Endothelial cell of umbilical vein (primary cell): ENCODE measurements at regions of chr12 and their contacts with region 1.

Region 1: GRCh38 chr12:47636908-47637780 is 68.7 kb downstream of the RPAP3 start:
- DNase-seq: no peak
- H3K4me3 ChIP-seq: no peak overlapping the region
- H3K27ac ChIP-seq: no peak overlapping the region
- H3K4me1 ChIP-seq: no peaks in the 10 kb centered on the region
- H3K27me3 ChIP-seq: no peaks in the 10 kb centered on the region
- CTCF ChIP-seq: peak; percentile 60 to 68
- POLR2A ChIP-seq: no peak

Region 2: GRCh38 chr12:47547085-47547484 is 90.1 kb before region 1 on chr12:
- CTCF ChIA-PET with region 1: interaction called, 42 read pairs
- POLR2A ChIA-PET with region 1: no interaction called
- dilution Hi-C with region 1: no loop called
- intact Hi-C with region 1: loop called (anchors 1 kb)
- DNase-seq: peak; percentile 69
- H3K4me3 ChIP-seq: no peak overlapping the region
- H3K27ac ChIP-seq: no peak overlapping the region
- H3K4me1 ChIP-seq: no peaks in the 10 kb centered on the region
- H3K27me3 ChIP-seq: peaks cover 3 to 4% of the 10 kb centered on the region in 2 experiments
- CTCF ChIP-seq: peak; percentile 40 to 46
- POLR2A ChIP-seq: no peak

Region 3: GRCh38 chr12:47604221-47604873 is 32.8 kb before region 1 on chr12:
- CTCF ChIA-PET with region 1: interaction called, 16 read pairs
- POLR2A ChIA-PET with region 1: no interaction called
- dilution Hi-C with region 1: no loop called
- intact Hi-C with region 1: no loop called
- DNase-seq: peak; percentile 80
- H3K4me3 ChIP-seq: no peak overlapping the region
- H3K27ac ChIP-seq: peak overlapping the region; percentile 9
- H3K4me1 ChIP-seq: peaks cover 10% of the 10 kb centered on the region
- H3K27me3 ChIP-seq: no peaks in the 10 kb centered on the region
- CTCF ChIP-seq: no peak
- POLR2A ChIP-seq: no peak